Activated CD8-positive, alpha-beta T cell treated with anti-CD3 and anti-CD28 coated beads for 36 hours (primary cell): ENCODE measurements at regions of chr22 and their contacts with region 1.

Region 1: DNA sequence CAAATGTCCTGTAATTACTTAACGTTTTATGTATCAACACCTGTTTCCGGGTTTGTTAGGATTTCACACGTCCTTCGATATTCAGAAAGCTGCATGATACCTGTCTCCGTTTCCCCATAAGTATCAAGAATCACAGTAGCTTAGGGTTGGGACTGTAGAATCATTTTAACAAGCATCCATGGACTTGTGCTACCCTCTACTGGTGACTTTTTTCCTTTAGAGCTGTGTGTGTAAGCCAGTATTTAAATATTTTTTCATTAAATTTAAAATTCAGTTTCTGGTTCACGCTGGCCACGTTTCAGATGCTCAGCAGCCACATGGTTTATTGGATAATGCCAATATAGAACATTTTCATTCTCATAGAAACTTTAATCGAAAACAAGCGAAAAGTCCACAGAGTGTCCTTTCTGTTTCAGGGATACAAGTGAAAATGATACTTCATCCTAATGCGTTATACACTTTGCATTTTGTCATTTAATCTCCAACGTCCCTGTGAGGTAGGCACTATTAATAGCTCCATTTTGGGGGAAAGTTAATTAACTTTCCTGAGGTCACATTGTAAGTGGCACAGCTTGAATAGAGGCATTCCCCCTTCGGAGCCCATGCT is 61.5 kb upstream of the SLC25A18 start:
- DNase-seq: peak; percentile 34
- ATAC-seq: peak; percentile 78
- H3K4me3 Mint-ChIP-seq: no peak overlapping the region
- H3K27ac Mint-ChIP-seq: no peak overlapping the region
- H3K4me1 Mint-ChIP-seq: no peaks in the 10 kb centered on the region
- H3K27me3 Mint-ChIP-seq: peaks cover 4% of the 10 kb centered on the region
- CTCF ChIP-seq: peak; percentile 66

Region 2: DNA sequence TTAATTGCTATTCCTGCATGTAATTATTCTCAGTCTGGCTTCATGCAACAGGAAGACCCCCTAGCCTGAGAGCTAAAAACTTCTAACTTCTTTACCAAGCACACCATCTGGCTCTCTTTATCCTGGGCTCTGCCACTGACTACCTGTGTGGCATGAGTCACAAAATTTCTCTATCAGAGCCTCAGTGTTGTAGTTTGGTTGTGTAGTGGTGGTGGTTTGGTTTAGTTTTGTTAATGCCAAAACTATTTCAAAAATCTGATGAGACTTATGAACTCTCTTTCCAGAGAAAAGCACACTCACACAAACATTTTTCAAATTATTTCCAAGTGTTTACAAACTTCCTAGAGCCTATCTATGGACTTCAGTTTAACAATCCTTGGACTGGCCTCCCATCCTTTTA is 424.5 kb before region 1 on chr22:
- CTCF ChIA-PET with region 1: interaction called, 33 read pairs
- POLR2A ChIA-PET with region 1: no interaction called
- intact Hi-C with region 1: loop called (anchors 5 kb)
- DNase-seq: no peak
- ATAC-seq: no peak
- H3K4me3 Mint-ChIP-seq: no peak overlapping the region
- H3K27ac Mint-ChIP-seq: no peak overlapping the region
- H3K4me1 Mint-ChIP-seq: peaks cover 18% of the 10 kb centered on the region
- H3K27me3 Mint-ChIP-seq: peaks cover 7% of the 10 kb centered on the region
- CTCF ChIP-seq: no peak

Region 3: GRCh38 chr22:17205432-17205831 is 296.4 kb before region 1 on chr22:
- CTCF ChIA-PET with region 1: interaction called, 12 read pairs
- POLR2A ChIA-PET with region 1: no interaction called
- intact Hi-C with region 1: no loop called
- DNase-seq: no peak
- ATAC-seq: no peak
- H3K4me3 Mint-ChIP-seq: no peak overlapping the region
- H3K27ac Mint-ChIP-seq: no peak overlapping the region
- H3K4me1 Mint-ChIP-seq: peaks cover 6% of the 10 kb centered on the region
- H3K27me3 Mint-ChIP-seq: no peaks in the 10 kb centered on the region
- CTCF ChIP-seq: peak; percentile 16